ENCODE measurements at regions of chr5 and their contacts with region 1.

Region 1: DNA sequence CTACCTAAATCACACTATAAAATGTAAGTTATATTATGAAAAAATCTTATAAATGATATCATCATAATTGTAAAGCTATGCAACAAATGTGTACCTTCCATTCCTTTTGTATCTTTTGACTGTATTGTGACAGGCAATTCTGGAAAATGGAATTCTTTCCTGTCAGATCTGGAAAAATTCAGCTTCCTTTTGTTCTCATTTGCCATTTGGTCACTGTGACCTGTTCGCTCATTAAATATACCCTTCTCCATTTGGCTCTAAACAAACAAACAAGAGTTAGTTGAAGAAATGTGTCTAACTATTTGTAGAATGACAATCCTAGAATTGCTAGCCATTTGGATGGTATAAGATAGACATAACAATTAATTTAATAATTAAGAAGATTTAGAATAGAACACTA is 62.7 kb downstream of the CDKL3 start:
- DNase-seq: no peak
- H3K4me3 ChIP-seq: no peak overlapping the region
- H3K27ac ChIP-seq: no peak overlapping the region
- H3K4me1 ChIP-seq: no peaks in the 10 kb centered on the region
- H3K27me3 ChIP-seq: no peaks in the 10 kb centered on the region
- CTCF ChIP-seq: no peak

Region 2: GRCh38 chr5:133814152-133814551 is 490.2 kb before region 1 on chr5:
- CTCF ChIA-PET with region 1: no interaction called
- POLR2A ChIA-PET with region 1: no interaction called
- intact Hi-C with region 1: no loop called
- DNase-seq: no peak
- H3K4me3 ChIP-seq: no peak overlapping the region
- H3K27ac ChIP-seq: no peak overlapping the region
- H3K4me1 ChIP-seq: no peaks in the 10 kb centered on the region
- H3K27me3 ChIP-seq: peaks cover 4% of the 10 kb centered on the region
- CTCF ChIP-seq: no peak

Region 3: DNA sequence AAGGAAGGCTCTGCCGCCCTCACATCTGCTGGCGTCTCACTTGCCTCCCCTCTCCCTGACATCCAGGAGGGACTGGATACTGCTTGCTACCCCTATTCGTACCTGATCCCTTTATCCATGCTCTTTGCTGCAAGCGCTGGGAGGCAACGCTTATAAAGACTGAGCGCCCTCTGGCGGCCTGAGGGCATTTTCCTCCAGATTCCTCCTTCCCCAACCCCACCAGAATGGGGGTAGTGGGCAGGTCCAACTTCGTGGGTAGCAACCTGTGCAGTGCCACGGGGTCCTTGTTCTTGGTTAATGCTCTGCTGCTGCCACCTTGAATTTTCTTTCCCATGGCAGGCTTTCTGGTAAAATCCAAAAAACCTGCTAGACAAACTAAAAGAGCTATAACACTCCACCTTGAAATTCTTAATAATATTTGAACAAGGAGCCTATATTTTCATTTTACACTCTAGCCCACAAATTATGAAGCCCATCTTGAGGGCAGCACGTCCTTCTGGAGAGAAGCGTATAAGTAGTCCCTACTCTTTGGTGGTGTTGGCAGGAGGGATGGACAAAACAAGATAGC is 273.6 kb after region 1 on chr5:
- CTCF ChIA-PET with region 1: no interaction called
- POLR2A ChIA-PET with region 1: no interaction called
- intact Hi-C with region 1: loop called (anchors 2 kb)
- DNase-seq: peak; percentile 86
- H3K4me3 ChIP-seq: no peak overlapping the region
- H3K27ac ChIP-seq: no peak overlapping the region
- H3K4me1 ChIP-seq: no peaks in the 10 kb centered on the region
- H3K27me3 ChIP-seq: no peaks in the 10 kb centered on the region
- CTCF ChIP-seq: peak; percentile 91

Region 4: GRCh38 chr5:134586866-134587524 is 282.7 kb after region 1 on chr5:
- CTCF ChIA-PET with region 1: no interaction called
- POLR2A ChIA-PET with region 1: no interaction called
- intact Hi-C with region 1: loop called (anchors 2 kb)
- DNase-seq: peak; percentile 86
- H3K4me3 ChIP-seq: no peak overlapping the region
- H3K27ac ChIP-seq: no peak overlapping the region
- H3K4me1 ChIP-seq: no peaks in the 10 kb centered on the region
- H3K27me3 ChIP-seq: no peaks in the 10 kb centered on the region
- CTCF ChIP-seq: peak; percentile 91